ENCODE measurements at regions of chr1 and their contacts with region 1.

Region 1: GRCh38 chr1:197775282-197776262 is at the start of gene DENND1B:
- DNase-seq: peak; percentile 83
- H3K4me3 ChIP-seq: peak within 1 kb of the TSS; percentile 36 to 78 (median 74)
- H3K27ac ChIP-seq: peak within 1 kb of the TSS; percentile 85 to 86 (median 86)
- H3K4me1 ChIP-seq: peaks cover 0 to 32% (median 22%) of the 10 kb centered on the region in 4 donors
- H3K27me3 ChIP-seq: no peaks in the 10 kb centered on the region
- CTCF ChIP-seq: no peak
- EP300 ChIP-seq: no peak
- POLR2A ChIP-seq: no peak
- total RNA-seq, gene DENND1B: 8.6 to 16.8 (median 11.5) TPM

Region 2: GRCh38 chr1:197902454-197903195 is 127.1 kb after region 1 on chr1 and contains the start of gene C1orf53:
- intact Hi-C with region 1: loop called (anchors 10 kb)
- DNase-seq: peak; percentile 88
- H3K4me3 ChIP-seq: peak within 1 kb of the TSS; percentile 58 to 80 (median 67)
- H3K27ac ChIP-seq: peak within 1 kb of the TSS; percentile 83 to 88 (median 86)
- H3K4me1 ChIP-seq: peaks cover 0 to 9% (median 3%) of the 10 kb centered on the region in 4 donors
- H3K27me3 ChIP-seq: peaks cover 8 to 44% (median 24%) of the 10 kb centered on the region in 3 donors
- CTCF ChIP-seq: no peak
- EP300 ChIP-seq: no peak
- POLR2A ChIP-seq: no peak
- total RNA-seq, gene C1orf53: 1.2 to 3.3 (median 2.9) TPM in 3 of 4 donors, not detected in the other

Measured in sigmoid colon (tissue), 7 donors.